ENCODE measurements at regions of chr1 and their contacts with region 1.

Region 1: GRCh38 chr1:65804584-65804983 is 11.9 kb downstream of the PDE4B start:
- DNase-seq: no peak
- H3K4me3 ChIP-seq: no peak overlapping the region
- H3K27ac ChIP-seq: no peak overlapping the region
- H3K4me1 ChIP-seq: no peaks in the 10 kb centered on the region
- H3K27me3 ChIP-seq: no peaks in the 10 kb centered on the region
- CTCF ChIP-seq: no peak

Region 2: DNA sequence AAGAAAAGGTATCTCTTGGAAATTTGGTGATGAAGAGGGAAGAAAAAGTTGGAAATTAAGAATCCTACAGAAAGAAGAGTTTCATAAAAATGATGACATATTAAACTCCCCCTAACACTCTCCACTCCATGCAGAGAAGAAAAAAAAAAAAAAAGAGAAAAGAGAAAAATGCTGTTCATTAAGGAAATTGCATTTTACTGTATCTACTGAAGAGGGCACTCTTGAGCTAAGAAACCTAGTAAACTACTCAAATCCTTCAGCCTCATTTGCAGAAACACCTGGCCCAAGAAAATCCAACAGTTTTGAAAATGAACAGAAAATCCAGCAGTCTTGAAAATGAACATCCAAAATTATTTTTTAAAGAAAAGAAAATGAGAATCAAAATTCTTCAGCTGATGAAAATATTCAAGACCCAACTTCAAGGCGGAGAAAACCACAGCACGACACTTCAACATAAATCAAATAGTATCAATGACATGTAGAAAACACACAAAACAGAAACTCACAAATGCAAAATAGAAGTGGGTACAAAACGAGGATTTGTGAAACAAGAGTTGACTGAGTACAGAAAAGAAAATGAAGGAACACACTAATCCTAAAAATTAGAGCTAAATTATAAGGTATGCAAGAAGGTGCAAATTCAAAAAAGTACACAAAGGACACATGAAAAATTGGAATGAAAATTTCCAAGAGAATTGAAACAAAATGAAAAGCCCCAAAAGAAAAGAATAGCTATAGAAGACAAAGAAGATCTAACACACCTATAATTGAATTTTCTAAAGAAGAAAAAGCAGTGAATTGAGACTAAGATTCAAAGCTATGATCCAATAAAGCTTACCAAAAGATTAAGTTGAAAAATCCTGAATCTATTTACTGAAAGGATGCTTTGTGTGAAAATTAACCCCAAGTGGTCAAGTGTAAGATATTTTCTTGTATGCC is 568.4 kb before region 1 on chr1:
- CTCF ChIA-PET with region 1: no interaction called
- dilution Hi-C with region 1: no loop called
- in situ Hi-C with region 1: no loop called
- intact Hi-C with region 1: no loop called
- DNase-seq: peak; percentile 33
- H3K4me3 ChIP-seq: no peak overlapping the region
- H3K27ac ChIP-seq: no peak overlapping the region
- H3K4me1 ChIP-seq: peaks cover under 1% of the 10 kb centered on the region
- H3K27me3 ChIP-seq: no peaks in the 10 kb centered on the region
- CTCF ChIP-seq: peak; percentile 60 to 61

Region 3: GRCh38 chr1:65756616-65757015 is 48.0 kb before region 1 on chr1:
- CTCF ChIA-PET with region 1: no interaction called
- dilution Hi-C with region 1: loop called (anchors 5 kb)
- in situ Hi-C with region 1: no loop called
- intact Hi-C with region 1: no loop called
- DNase-seq: no peak
- H3K4me3 ChIP-seq: no peak overlapping the region
- H3K27ac ChIP-seq: no peak overlapping the region
- H3K4me1 ChIP-seq: no peaks in the 10 kb centered on the region
- H3K27me3 ChIP-seq: no peaks in the 10 kb centered on the region
- CTCF ChIP-seq: no peak